ENCODE measurements at regions of chr3 and their contacts with region 1.

Region 1: GRCh38 chr3:113912552-113913236 is 35.1 kb upstream of the ZDHHC23 start:
- DNase-seq: no peak
- ATAC-seq: peak in 1 of 4 donors; percentile 57
- H3K4me3 ChIP-seq: no peak overlapping the region
- H3K27ac ChIP-seq: no peak overlapping the region
- H3K4me1 ChIP-seq: peaks cover 0 to 9% (median 0%) of the 10 kb centered on the region in 12 donors
- H3K27me3 ChIP-seq: no peaks in the 10 kb centered on the region
- CTCF ChIP-seq: peak in 10 of 12 donors; percentile 12 to 52 (median 42)
- POLR2A ChIP-seq: no peak

Region 2: GRCh38 chr3:113838631-113839209 is 74.0 kb before region 1 on chr3 and contains the start of gene GRAMD1C:
- intact Hi-C with region 1: loop called in 9 of 10 experiments (anchors 2 to 10 kb)
- DNase-seq: peak; percentile 85 to 94 (median 86)
- ATAC-seq: peak; percentile 68 to 100 (median 98)
- H3K4me3 ChIP-seq: peak within 1 kb of the TSS; percentile 33 to 66 (median 56)
- H3K27ac ChIP-seq: peak within 1 kb of the TSS in 7 of 12 donors; percentile 5 to 61 (median 49)
- H3K4me1 ChIP-seq: peaks cover 0 to 8% (median 0%) of the 10 kb centered on the region in 12 donors
- H3K27me3 ChIP-seq: no peaks in the 10 kb centered on the region
- CTCF ChIP-seq: peak; percentile 71 to 94 (median 87)
- POLR2A ChIP-seq: peak in 1 of 2 donors; percentile 21
- total RNA-seq, gene GRAMD1C: 0.49 to 5.6 (median 1.2) TPM

Region 3: DNA sequence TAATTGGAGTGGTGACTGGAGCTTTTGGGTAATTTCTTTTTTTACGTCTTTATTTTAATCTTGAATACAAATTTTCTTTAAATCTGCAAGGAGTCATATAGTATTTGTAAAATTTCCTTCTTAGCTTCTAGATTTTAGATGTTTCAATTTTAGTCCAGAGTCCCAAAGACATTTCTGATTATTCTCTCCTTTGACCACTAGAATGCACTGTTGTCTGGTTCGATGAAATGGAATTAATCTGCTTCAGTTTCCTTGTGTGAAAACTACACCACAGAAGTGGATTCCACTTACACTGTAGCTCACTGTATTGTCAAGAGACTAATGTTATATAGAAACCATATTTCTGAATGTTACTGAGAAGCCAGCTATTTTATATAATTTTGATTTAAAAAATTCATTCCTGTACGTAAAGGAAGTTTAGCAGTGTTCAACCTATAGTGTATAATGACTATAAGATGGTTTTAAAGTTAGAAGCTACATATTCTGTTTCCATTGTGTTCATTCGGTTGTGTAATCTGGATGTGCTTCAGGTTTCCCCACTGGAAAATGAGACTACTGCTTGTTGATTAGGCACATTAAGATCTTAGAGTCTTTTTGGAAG is 68.0 kb before region 1 on chr3:
- intact Hi-C with region 1: loop called in 9 of 10 experiments (anchors 2 to 10 kb)
- DNase-seq: no peak
- ATAC-seq: no peak
- H3K4me3 ChIP-seq: no peak overlapping the region
- H3K27ac ChIP-seq: no peak overlapping the region
- H3K4me1 ChIP-seq: no peaks in the 10 kb centered on the region
- H3K27me3 ChIP-seq: no peaks in the 10 kb centered on the region
- CTCF ChIP-seq: peak; percentile 32 to 70 (median 48)
- POLR2A ChIP-seq: no peak

Measured in heart left ventricle (tissue), 16 donors.